ENCODE measurements at regions of chr10 and their contacts with region 1.

Region 1: GRCh38 chr10:114876602-114877300 is 55.2 kb downstream of the FHIP2A start:
- DNase-seq: peak; percentile 8
- ATAC-seq: peak; percentile 93
- H3K4me3 ChIP-seq: no peak overlapping the region
- H3K27ac ChIP-seq: no peak overlapping the region
- H3K4me1 ChIP-seq: no peaks in the 10 kb centered on the region
- H3K27me3 ChIP-seq: no peaks in the 10 kb centered on the region; a peak in 1 of 4 replicates
- CTCF ChIP-seq: peak; percentile 84 to 89 (median 85)
- EP300 ChIP-seq: no peak
- POLR2A ChIP-seq: no peak
- RAD21 ChIP-seq: peak; percentile 94

Region 2: DNA sequence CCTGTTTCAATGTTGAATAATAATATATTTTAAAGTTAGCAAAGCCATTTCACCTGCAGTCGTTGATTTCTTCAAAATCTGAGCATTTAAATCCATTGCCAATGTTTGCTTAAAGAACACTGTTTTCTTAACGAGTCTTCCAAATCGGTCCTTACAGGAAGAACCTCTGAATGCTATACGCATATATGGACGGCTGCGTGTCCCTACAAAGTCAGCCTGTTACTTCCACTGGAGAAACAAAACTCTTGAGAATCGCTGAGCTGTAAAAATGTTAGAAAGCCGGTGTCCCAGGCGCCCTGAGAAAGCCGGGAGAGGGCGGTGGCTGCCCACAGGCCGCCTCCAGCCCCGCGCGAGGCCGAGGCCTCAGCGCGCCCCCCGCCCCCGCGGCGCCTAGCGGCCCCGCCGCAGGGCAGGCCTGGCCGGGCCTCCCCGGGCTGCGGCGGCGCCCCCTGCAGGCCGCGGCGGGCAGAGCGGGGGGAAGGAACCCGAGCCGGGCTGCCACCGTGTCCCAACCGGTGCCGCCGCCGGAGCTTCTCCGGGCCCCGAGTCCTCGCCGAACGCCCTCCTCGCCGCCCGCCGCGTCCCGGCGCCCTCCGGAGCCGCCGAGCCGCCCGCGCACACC is 55.3 kb before region 1 on chr10 and contains the start of gene FHIP2A:
- CTCF ChIA-PET with region 1: interaction called, 13 read pairs
- POLR2A ChIA-PET with region 1: interaction called, 4 read pairs
- RAD21 ChIA-PET with region 1: interaction called, 5 read pairs
- SMC1A ChIA-PET with region 1: interaction called, 5 read pairs
- in situ Hi-C with region 1: no loop called
- intact Hi-C with region 1: no loop called
- DNase-seq: no peak
- ATAC-seq: peak; percentile 84
- H3K4me3 ChIP-seq: peak within 1 kb of the TSS; percentile 75
- H3K27ac ChIP-seq: peak within 1 kb of the TSS; percentile 80
- H3K4me1 ChIP-seq: peaks cover 16% of the 10 kb centered on the region
- H3K27me3 ChIP-seq: no peaks in the 10 kb centered on the region
- CTCF ChIP-seq: peak; percentile 30 to 59 (median 51); a peak in 3 of 6 replicates
- EP300 ChIP-seq: no peak
- POLR2A ChIP-seq: peak; percentile 73
- RAD21 ChIP-seq: peak; percentile 58
- polyA plus RNA-seq, gene FHIP2A: 6.8 to 9.2 TPM

Region 3: DNA sequence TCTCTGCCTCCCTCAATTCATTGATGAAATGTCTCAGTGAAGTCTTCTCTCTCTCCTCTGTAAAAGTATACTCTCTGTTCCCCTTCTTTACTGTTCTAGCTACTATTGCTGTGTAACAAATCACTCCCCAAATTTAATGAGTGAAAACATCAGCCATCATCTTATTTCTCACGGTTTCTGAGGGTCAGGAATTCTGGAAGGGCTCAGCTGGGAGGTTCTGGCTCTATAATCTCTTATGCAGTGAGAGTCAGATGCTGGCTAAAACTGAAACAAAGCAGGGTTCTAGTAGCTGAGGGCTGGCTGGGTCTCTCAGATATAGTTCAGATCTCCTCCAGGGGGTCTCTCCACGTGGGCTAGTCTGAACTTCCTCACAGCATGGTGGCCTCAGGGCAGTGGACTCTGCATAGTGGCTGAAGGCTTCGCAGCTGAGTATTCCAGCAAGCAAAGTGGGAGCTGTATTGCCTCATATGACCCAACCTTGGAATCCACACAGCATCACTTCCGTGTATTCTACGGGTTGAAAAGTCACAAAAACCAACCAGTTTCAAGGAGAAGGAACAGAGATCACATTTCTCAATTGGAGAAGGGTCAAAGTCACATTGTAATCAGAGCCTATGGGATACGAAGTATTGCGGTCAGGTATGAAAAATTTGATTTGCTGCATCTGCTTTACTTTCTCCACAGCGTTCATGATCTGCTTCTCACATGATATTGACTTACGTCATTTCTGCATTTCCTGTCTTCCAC is 141.6 kb after region 1 on chr10:
- CTCF ChIA-PET with region 1: no interaction called
- POLR2A ChIA-PET with region 1: no interaction called
- RAD21 ChIA-PET with region 1: no interaction called
- SMC1A ChIA-PET with region 1: no interaction called
- in situ Hi-C with region 1: no loop called
- intact Hi-C with region 1: loop called (anchors 10 kb)
- DNase-seq: no peak
- ATAC-seq: no peak
- H3K4me3 ChIP-seq: no peak overlapping the region
- H3K27ac ChIP-seq: no peak overlapping the region
- H3K4me1 ChIP-seq: no peaks in the 10 kb centered on the region; the same call in 1 of the 2 replicates
- H3K27me3 ChIP-seq: no peaks in the 10 kb centered on the region
- CTCF ChIP-seq: no peak
- EP300 ChIP-seq: no peak
- POLR2A ChIP-seq: no peak
- RAD21 ChIP-seq: no peak

Region 4: DNA sequence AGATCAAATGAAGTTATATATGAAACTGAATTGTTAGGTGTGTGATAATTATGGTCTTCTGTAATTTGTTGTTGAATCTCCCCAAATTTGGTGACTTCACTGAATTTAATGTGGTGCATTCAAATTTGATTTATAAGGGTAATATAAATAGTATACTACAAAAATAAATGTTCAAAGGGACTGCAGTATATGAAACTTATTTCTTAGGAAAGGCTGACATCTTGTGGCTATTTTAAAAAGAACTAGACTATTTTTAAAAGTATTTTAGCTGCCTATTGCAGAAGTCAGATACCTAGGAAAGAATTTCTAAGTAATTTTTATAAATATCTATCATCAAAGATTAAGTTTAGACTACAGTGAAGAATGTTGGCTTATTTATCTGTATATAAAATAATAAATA is 253.0 kb after region 1 on chr10:
- CTCF ChIA-PET with region 1: interaction called, 55 read pairs
- POLR2A ChIA-PET with region 1: no interaction called
- RAD21 ChIA-PET with region 1: interaction called, 44 read pairs
- SMC1A ChIA-PET with region 1: interaction called, 35 read pairs
- in situ Hi-C with region 1: loop called (anchors 5 kb)
- intact Hi-C with region 1: loop called (anchors 1 kb)
- DNase-seq: no peak
- ATAC-seq: peak; percentile 50
- H3K4me3 ChIP-seq: no peak overlapping the region
- H3K27ac ChIP-seq: no peak overlapping the region
- H3K4me1 ChIP-seq: no peaks in the 10 kb centered on the region
- H3K27me3 ChIP-seq: no peaks in the 10 kb centered on the region
- CTCF ChIP-seq: no peak; a peak in 1 of 6 replicates
- EP300 ChIP-seq: no peak
- POLR2A ChIP-seq: no peak
- RAD21 ChIP-seq: peak; percentile 55

Region 5: DNA sequence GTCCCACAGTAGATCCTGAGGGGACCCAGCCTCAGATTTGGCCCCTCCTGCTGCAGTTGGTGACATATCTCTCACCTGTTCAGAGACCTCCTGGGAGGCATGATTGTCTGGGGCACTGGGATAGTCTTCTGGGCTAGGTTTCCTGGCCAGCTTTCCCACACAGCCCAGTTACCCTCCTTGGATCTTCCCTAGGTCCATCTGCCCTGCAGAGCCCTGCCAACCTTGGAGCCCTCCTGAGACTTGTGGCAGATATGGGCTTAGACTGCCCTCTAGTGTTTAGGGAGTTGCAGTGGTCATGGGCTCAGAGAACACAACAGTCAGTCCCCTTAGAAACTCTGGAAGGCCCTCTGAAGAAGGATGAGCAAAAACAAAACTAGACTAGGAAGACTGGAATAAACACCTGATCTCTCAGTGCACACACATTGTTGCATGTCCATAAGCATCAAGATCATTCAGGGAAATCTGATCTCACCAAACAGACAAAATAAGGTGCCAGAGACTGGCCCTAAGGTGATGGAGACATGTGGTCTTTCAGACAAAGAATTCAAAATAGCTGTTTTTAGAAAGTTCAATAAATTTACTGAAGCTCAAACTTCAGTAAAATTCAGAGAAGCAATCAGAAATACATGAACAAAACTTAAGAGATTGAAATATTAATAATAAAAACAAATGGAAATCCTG is 541.0 kb after region 1 on chr10:
- CTCF ChIA-PET with region 1: interaction called, 4 read pairs
- POLR2A ChIA-PET with region 1: no interaction called
- RAD21 ChIA-PET with region 1: interaction called, 3 read pairs
- SMC1A ChIA-PET with region 1: no interaction called
- in situ Hi-C with region 1: loop called (anchors 10 kb)
- intact Hi-C with region 1: loop called (anchors 1 kb)
- DNase-seq: peak; percentile 4
- ATAC-seq: peak; percentile 99
- H3K4me3 ChIP-seq: no peak overlapping the region
- H3K27ac ChIP-seq: no peak overlapping the region
- H3K4me1 ChIP-seq: no peaks in the 10 kb centered on the region
- H3K27me3 ChIP-seq: no peaks in the 10 kb centered on the region
- CTCF ChIP-seq: peak; percentile 71 to 79 (median 78)
- EP300 ChIP-seq: no peak
- POLR2A ChIP-seq: no peak
- RAD21 ChIP-seq: peak; percentile 89

Measured in GM12878 (cell line).